Astrocyte of the cerebellum (primary cell): ENCODE measurements at regions of chr7 and their contacts with region 1.

Region 1: GRCh38 chr7:70529914-70530585 is 601.9 kb upstream of the GALNT17 start:
- DNase-seq: peak; percentile 19
- H3K4me3 ChIP-seq: no peak overlapping the region
- CTCF ChIP-seq: no peak

Region 2: DNA sequence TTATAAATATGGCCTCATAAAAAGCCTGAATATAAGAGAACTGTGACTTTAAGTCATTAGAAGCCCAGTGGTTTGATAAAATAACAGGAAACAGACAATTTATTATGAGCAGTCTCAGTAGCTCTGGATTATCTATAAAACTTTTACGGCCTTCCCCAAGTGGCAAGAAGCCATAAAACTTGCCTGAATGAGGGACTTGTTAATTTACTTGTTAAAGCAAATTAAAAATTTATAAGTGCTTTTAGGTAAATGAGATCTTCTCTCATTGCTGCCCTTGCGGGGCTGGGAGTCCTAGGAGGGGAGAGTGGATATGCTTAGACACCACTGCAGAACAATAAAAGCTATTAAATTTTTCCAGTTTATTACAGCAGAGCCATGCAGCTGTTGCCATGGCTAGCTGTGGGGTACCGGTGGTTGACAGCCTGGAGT is 431.9 kb before region 1 on chr7:
- in situ Hi-C with region 1: no loop called
- DNase-seq: no peak
- H3K4me3 ChIP-seq: no peak overlapping the region
- CTCF ChIP-seq: no peak

Region 3: GRCh38 chr7:70480927-70481569 is 49.0 kb before region 1 on chr7:
- in situ Hi-C with region 1: loop called (anchors 5 kb)
- DNase-seq: peak; percentile 24
- H3K4me3 ChIP-seq: no peak overlapping the region
- CTCF ChIP-seq: no peak

Region 4: GRCh38 chr7:70571403-70571934 is 41.4 kb after region 1 on chr7:
- in situ Hi-C with region 1: no loop called
- DNase-seq: peak; percentile 70
- H3K4me3 ChIP-seq: no peak overlapping the region
- CTCF ChIP-seq: no peak

Region 5: DNA sequence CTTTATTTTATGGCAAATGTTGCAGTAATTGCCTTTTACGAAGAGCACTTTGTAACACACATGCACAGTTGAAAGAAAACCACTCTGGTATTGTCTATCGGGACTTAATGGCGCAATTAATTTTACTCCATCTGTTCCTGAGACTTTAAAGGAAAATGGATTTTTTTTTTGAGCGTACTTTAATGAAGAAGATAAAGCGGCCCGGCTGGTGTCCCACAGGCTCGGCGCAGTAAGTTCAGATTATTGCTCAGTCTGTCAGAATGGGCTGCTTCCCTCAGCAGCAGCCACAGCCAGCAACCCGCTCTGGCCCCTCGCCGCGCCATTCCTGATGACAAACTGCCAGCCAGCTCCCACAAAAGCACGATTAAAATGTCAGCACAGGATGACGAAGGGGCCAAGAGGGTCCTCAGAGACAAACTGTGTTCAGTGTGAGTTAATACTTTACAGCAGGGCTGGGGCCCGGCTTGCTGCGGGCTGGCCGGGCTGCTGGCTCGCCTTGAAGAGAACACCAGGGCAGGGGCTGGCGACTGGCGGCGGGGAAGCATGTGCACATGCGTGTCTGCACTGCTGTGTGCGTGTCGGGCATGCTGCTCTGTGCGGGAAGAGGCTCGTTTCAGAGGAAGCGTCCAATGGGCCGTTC is 100.9 kb after region 1 on chr7:
- in situ Hi-C with region 1: loop called (anchors 5 kb)
- DNase-seq: peak; percentile 26
- H3K4me3 ChIP-seq: no peak overlapping the region
- CTCF ChIP-seq: no peak